AG04449 (cell line): ENCODE measurements at regions of chrX and their contacts with region 1.

Region 1: DNA sequence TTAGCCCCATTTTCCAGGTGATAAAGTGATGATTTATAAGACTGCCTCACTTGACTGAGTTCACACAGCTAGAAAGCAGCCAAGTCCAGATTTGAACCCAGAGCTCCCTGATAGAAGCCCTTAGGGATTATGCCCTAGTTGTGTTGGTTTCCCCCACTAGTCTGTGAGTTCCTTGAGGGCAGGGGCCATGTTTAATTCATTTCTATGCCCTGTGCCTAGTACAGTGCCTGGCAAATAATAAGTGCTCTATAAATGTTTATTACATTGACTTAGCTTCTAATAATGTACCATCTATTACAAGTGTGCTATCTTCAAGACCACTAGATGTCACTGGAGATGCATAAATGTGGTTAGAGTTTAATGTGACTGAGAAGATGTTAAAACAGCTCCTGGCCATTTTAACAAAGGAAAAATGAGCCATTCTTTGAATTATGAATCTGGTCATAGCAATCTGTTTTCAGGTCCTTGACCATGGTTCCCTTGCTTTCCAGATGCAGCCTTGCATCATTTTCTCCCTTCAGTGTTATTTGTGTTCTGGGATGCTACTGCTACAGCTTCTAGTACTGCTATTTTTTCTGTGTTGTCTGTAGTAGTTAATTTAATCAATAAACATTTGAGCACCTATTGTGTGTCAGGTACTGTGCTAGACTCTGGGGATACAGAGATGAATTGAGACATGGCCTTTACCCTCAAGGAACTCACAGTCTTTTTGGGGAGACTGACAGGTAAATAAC is 43.2 kb downstream of the SLC9A6 start:
- DNase-seq: no peak
- H3K4me3 ChIP-seq: no peak overlapping the region
- CTCF ChIP-seq: peak; percentile 19

Region 2: DNA sequence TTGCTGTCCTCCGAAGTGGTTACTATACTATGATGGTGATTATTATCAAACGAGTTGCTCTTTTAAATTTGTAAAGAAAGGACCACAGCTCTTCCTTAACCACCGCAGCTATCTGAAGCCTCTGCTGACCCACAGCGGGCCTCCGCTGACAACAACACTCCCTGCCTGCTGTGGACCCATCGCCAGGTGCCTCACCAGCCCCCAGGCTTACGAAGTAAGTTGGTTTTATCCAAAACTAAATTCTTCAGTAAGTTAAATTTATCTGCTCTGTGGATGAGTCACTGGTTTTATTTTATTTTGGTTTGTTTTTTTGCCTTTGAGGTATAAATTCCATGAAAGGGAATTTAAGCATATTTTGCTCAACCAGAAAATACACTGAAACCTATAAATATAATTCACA is 11.6 kb after region 1 on chrX:
- CTCF ChIA-PET with region 1: interaction called, 12 read pairs
- POLR2A ChIA-PET with region 1: no interaction called
- DNase-seq: no peak
- H3K4me3 ChIP-seq: no peak overlapping the region
- CTCF ChIP-seq: no peak

Region 3: GRCh38 chrX:136086521-136086920 is 58.1 kb after region 1 on chrX:
- CTCF ChIA-PET with region 1: no interaction called
- POLR2A ChIA-PET with region 1: no interaction called
- DNase-seq: no peak
- H3K4me3 ChIP-seq: no peak overlapping the region
- CTCF ChIP-seq: no peak

Region 4: GRCh38 chrX:136162831-136163570 is 134.6 kb after region 1 on chrX:
- CTCF ChIA-PET with region 1: interaction called, 210 read pairs
- POLR2A ChIA-PET with region 1: interaction called, 6 read pairs
- DNase-seq: no peak
- H3K4me3 ChIP-seq: no peak overlapping the region
- CTCF ChIP-seq: peak; percentile 76

Region 5: DNA sequence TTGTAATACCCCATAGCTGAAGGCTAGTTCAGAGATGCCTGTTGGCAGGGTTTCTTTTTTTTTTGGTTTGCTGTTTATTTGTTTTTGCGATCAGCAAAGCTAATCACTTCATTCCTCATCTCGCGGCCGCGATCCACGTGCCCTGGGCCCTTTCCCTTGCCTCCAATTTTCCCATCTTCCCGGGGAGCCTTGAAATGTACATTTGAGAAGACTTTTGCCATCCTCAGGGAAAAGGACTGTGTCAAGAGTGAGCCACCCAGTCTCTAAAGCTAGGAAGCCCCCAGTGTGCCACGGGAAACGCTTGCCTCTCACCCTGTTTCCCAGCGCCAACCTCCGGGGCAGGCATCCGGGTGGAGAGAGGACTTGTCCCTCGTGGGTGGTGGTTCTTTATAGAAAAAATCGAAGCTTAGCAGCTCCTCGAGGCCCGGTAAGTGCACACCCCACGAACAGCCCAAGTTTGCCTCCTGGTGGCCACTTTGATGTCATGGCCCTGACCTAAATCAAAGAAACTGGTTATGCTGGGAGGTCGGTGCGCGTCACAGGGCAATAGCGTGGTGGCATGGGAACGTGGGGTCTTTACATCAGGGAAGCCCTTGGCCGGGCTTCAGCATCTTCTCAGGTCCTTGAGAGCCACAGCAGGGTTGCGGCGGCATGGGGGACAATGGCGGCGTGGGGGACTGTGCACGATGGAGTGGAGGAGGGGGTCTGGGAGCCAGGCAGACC is 180.8 kb after region 1 on chrX:
- CTCF ChIA-PET with region 1: interaction called, 94 read pairs
- POLR2A ChIA-PET with region 1: no interaction called
- DNase-seq: no peak
- H3K4me3 ChIP-seq: no peak overlapping the region
- CTCF ChIP-seq: peak; percentile 57

Region 6: DNA sequence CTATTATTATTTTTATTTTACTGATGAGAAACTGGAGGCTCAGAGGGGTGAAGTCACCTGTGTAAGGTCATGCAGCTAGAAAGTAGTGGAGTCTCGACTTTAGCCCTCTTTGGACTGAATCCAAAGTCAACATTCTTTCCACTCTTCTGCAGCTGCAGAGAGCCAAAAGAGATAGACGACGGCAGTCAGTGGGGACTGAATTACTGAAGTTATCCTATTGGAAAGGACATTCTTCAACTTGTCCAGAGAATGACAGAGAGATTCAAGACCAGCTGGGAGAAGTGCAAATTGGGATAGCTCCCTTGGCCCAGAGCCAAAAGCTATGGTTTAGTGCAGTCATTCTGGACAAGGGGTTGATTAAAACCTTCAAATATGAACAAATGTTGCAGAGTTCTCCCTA is 546.1 kb after region 1 on chrX:
- CTCF ChIA-PET with region 1: interaction called, 10 read pairs
- POLR2A ChIA-PET with region 1: interaction called, 3 read pairs
- DNase-seq: no peak
- H3K4me3 ChIP-seq: no peak overlapping the region
- CTCF ChIP-seq: no peak